PC-3 (cell line): ENCODE measurements at regions of chrX and their contacts with region 1.

Region 1: DNA sequence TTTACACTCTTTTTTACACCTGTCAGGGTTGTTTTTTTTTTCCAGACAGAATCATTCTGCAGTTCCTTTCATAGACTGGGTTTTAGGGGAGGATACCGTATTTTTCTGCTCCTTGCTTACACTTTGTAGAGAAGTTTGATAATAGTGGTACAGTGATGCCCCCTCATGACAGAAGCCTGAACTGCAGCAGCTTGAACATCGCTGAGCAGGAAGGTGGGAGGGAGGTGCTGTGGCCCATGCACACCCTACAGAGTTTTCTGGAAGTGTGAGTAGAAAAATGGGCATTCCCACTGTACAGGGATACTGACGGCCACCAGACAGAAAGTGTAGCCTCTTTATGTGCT is 54.5 kb downstream of the RAB40A start:
- DNase-seq: peak; percentile 88
- ATAC-seq: peak; percentile 90
- H3K4me3 ChIP-seq: peak overlapping the region; percentile 65
- H3K27ac ChIP-seq: no peak overlapping the region
- H3K4me1 ChIP-seq: no peaks in the 10 kb centered on the region
- H3K27me3 ChIP-seq: no peaks in the 10 kb centered on the region
- CTCF ChIP-seq: peak; percentile 78

Region 2: DNA sequence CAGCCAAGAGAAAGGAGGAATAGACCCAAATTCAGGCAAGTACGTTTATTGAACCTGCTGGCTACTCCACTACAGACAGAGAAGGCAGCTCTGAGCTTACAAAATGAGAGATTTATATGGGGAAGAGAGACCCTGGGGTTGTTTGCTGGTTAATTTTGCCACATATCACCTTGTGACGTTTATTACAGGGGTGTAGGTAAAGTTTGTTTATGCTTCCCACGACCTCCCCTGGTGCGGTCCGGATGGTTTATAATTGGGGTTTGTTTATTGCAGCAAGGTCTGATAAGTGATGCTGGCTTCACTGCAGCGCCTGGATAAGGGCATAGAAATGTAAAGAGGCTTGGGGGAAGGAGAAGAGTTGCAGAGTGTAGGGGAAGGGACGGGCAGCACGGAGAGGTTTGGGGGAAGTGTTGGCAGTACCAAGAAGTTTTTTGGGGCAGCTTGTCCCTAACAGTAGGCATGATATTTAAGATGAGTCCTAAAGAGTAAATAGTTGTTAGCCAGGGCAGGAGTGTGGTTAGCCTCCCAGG is 413.4 kb before region 1 on chrX:
- CTCF ChIA-PET with region 1: no interaction called
- POLR2A ChIA-PET with region 1: no interaction called
- intact Hi-C with region 1: no loop called
- DNase-seq: no peak
- ATAC-seq: no peak
- H3K4me3 ChIP-seq: no peak overlapping the region
- H3K27ac ChIP-seq: no peak overlapping the region
- H3K4me1 ChIP-seq: no peaks in the 10 kb centered on the region
- H3K27me3 ChIP-seq: no peaks in the 10 kb centered on the region
- CTCF ChIP-seq: no peak

Region 3: DNA sequence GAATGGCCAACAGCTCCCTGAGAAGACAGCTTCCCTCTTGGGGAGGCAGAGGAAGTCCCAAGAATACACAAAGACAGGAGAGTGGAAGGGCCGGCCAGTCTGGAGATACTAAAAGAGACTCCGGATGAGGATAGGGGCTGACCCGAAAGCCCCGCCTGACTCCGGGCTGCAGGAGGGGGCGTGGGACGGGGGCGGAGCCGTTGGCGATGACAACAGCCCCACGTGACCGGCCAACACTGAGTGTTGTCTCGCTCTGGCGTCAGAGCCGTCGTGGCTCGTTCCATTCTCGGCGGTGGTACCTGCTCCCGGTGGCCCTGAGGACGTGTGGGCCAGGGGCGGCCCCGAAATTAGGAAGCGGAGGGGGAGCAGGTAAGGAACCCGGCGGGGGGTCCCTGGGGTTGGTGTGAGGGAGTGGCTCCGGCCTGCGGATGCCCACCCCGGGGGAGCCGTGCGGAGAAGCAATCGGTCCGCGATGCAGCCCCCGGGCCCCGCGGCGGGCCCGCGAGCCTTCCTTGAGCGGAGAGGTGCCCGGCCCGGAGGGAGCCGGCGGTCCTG is 249.8 kb before region 1 on chrX and contains the start of gene BEX4:
- CTCF ChIA-PET with region 1: interaction called, 10 read pairs
- POLR2A ChIA-PET with region 1: no interaction called
- intact Hi-C with region 1: no loop called
- DNase-seq: peak; percentile 68
- ATAC-seq: peak; percentile 91
- H3K4me3 ChIP-seq: peak within 1 kb of the TSS; percentile 68
- H3K27ac ChIP-seq: no peak within 1 kb of the TSS
- H3K4me1 ChIP-seq: no peaks in the 10 kb centered on the region
- H3K27me3 ChIP-seq: no peaks in the 10 kb centered on the region
- CTCF ChIP-seq: no peak
- total RNA-seq, gene BEX4: 10.9 and 11.5 TPM in 2 replicates

Region 4: GRCh38 chrX:103343105-103343504 is 121.6 kb before region 1 on chrX:
- CTCF ChIA-PET with region 1: interaction called, 10 read pairs
- POLR2A ChIA-PET with region 1: no interaction called
- intact Hi-C with region 1: loop called (anchors 1 kb)
- DNase-seq: peak; percentile 71
- ATAC-seq: peak; percentile 45
- H3K4me3 ChIP-seq: no peak overlapping the region
- H3K27ac ChIP-seq: no peak overlapping the region
- H3K4me1 ChIP-seq: no peaks in the 10 kb centered on the region
- H3K27me3 ChIP-seq: peaks cover 7% of the 10 kb centered on the region; the same call in 1 of the 2 replicates
- CTCF ChIP-seq: peak; percentile 75

Region 5: GRCh38 chrX:103398421-103398864 is 66.3 kb before region 1 on chrX:
- CTCF ChIA-PET with region 1: no interaction called
- POLR2A ChIA-PET with region 1: no interaction called
- intact Hi-C with region 1: loop called (anchors 5 kb)
- DNase-seq: peak; percentile 74
- ATAC-seq: peak; percentile 90
- H3K4me3 ChIP-seq: no peak overlapping the region
- H3K27ac ChIP-seq: no peak overlapping the region
- H3K4me1 ChIP-seq: peaks cover 26% of the 10 kb centered on the region
- H3K27me3 ChIP-seq: no peaks in the 10 kb centered on the region
- CTCF ChIP-seq: no peak